Posterior vena cava (tissue), 2 donors: ENCODE measurements at regions of chr9 and their contacts with region 1.

Region 1: GRCh38 chr9:38380872-38381534 is 11.5 kb upstream of the ALDH1B1 start:
- DNase-seq: no peak

Region 2: GRCh38 chr9:37079370-37080164 is 1301.4 kb before region 1 on chr9:
- intact Hi-C with region 1: no loop called
- DNase-seq: peak; percentile 97

Region 3: DNA sequence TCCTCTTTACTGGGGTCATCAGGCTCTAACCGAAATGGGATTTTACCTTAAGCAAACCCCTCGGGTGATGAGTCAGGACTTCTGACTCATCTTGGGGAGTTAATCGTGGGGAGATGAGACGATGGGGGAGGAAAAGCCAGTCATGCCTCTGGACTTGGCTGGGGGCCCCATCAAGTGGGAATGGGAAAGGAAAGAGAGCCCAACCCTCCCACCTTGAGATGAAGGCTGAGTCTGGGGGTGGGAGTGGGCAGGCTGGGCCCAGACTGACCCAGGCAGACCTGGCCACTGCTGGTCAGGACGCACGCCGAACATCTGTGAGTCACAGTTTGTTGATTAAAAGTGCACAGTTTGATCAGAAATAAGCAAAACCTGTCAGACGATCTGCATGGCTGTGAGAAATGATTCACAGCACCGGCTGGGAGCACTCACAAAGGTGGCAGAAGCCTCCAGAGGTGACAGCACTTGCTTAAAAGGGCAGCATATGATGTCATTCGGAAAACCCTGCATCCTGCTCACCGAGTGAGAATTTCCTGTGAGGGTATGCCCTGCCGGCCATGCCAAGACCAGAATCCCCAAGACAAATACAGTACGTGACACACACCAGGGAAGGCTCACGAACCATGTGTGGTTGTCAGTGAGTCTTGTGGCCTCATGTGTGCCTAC is 427.1 kb before region 1 on chr9:
- intact Hi-C with region 1: loop called in 1 of 2 experiments (anchors 10 kb)
- DNase-seq: peak; percentile 86

Region 4: DNA sequence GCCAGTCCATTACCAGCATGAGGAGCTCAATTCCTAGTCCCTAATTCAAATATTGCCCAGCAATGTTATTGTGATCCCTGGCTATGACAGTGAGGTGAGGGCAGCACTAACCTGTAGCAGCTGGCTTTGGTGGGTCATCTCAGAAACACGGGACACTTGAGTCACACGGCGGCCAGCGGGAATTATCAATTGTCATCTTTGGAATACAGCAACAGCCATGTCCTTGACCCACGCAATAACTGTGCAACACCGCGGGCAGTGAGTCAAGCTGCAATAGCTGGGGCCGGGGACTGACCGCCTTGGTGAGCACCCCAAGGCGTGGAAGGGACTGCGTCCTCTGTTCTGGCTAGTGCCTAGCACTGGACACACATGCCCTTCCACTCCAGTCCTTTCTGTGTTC is 51.0 kb before region 1 on chr9:
- intact Hi-C with region 1: no loop called
- DNase-seq: no peak

Region 5: DNA sequence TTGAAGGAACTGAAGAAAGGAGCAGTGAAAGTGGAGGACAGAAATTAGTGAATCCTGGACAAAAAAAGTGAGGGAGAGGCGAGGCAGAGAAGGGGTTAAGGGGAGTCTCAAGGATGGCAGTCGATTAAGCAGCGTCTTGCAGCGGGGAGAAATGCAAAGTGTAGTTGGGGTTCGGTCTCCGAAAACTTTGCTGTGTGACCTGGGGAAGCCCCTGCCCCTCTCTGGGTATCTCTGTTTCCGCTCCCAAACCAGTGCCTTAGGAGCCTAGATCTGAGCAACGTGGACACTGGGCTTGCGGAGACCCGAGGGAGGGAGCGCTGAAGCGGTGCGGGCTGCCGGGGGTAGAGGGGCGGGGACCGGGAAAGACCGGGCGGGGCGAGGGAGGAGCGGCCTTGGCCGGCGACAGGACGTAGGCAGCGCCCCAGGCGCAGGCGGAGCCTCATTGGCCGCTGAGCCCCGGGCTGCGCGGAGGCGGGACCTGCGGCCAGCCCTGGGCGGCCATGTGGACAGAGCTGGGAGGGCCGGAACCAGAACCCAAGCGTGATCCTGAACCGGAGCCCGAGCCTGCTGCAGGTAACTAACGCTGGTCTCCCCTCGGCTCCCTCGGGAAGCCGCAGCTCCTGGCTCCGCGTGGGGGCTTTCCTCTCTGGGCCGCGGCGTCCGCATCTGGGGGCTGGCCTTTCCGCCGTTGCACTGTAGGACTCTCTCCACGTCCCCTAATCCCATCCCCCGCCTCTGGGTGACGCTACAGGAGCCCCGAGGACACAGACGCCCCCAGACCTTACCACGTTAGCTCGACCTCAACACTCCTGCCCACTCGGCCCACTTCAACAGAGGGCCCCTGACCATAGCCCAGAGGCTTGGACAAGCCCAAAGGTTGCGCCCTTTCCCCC is 11.5 kb after region 1 on chr9 and contains the start of gene ALDH1B1:
- intact Hi-C with region 1: loop called in 1 of 2 experiments (anchors 2 kb)
- DNase-seq: peak; percentile 96
- total RNA-seq, gene ALDH1B1: 200 to 217 TPM

Region 6: GRCh38 chr9:38445154-38446043 is 64.4 kb after region 1 on chr9:
- intact Hi-C with region 1: no loop called
- DNase-seq: no peak